Activated CD4-positive, alpha-beta memory T cell treated with anti-CD3 and anti-CD28 coated beads for 36 hours (primary cell): ENCODE measurements at regions of chrX and their contacts with region 1.

Region 1: DNA sequence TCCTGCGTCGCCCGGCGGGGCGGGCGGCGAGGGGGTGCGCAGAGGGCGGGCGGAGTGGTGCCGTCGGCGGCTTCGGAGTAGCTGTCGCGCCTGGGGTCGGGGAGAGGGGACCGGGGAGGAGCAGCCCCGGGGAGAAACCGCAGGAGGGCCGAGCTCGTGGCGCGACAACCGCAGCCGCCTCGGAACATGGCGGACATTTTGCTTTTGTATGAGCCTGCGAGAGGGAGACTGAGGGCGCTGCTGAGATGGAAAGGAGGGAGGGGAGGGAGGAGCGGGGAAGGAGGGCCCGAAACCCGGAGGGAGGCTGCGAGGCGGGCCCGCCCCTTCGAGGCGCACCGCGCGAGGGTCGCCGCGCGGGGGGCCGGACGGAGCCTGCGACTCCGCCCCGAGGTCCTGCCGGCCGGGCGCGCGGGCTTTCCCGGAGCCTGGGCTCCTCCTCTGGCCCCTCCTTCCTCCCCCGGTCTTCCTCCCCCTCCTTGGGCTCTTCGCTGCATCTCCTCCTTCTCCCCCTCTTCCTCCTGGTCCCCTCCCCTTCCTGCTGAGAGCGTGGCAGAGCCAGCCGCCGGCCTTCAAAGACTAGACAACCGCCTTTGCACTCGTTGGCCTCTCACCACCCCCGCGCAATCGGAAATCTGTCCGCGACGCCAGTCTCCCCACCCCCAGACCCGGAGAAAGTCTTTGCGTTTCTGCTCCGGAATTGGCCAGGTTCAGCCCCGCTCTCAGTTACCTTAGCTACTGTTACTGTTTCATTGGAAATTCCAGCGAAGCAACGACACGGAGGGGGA is 1.1 kb downstream of the INTS6L start:
- DNase-seq: peak; percentile 92
- H3K4me3 Mint-ChIP-seq: peak overlapping the region; percentile 99
- H3K27ac Mint-ChIP-seq: peak overlapping the region; percentile 100
- H3K4me1 Mint-ChIP-seq: peaks cover 41% of the 10 kb centered on the region
- H3K27me3 Mint-ChIP-seq: peaks cover 2% of the 10 kb centered on the region

Region 2: GRCh38 chrX:134807039-134807731 is 714.4 kb before region 1 on chrX:
- CTCF ChIA-PET with region 1: no interaction called
- POLR2A ChIA-PET with region 1: no interaction called
- intact Hi-C with region 1: loop called (anchors 2 kb)
- DNase-seq: peak; percentile 91
- H3K4me3 Mint-ChIP-seq: peak overlapping the region; percentile 90
- H3K27ac Mint-ChIP-seq: peak overlapping the region; percentile 93
- H3K4me1 Mint-ChIP-seq: peaks cover 20% of the 10 kb centered on the region
- H3K27me3 Mint-ChIP-seq: no peaks in the 10 kb centered on the region

Region 3: GRCh38 chrX:135050603-135051002 is 471.0 kb before region 1 on chrX:
- CTCF ChIA-PET with region 1: no interaction called
- POLR2A ChIA-PET with region 1: no interaction called
- intact Hi-C with region 1: loop called (anchors 1 kb)
- DNase-seq: no peak
- H3K4me3 Mint-ChIP-seq: peak overlapping the region; percentile 79
- H3K27ac Mint-ChIP-seq: no peak overlapping the region
- H3K4me1 Mint-ChIP-seq: peaks cover 24% of the 10 kb centered on the region
- H3K27me3 Mint-ChIP-seq: no peaks in the 10 kb centered on the region

Region 4: GRCh38 chrX:135403374-135403773 is 118.2 kb before region 1 on chrX:
- CTCF ChIA-PET with region 1: no interaction called
- POLR2A ChIA-PET with region 1: no interaction called
- intact Hi-C with region 1: no loop called
- DNase-seq: no peak
- H3K4me3 Mint-ChIP-seq: no peak overlapping the region
- H3K27ac Mint-ChIP-seq: no peak overlapping the region
- H3K4me1 Mint-ChIP-seq: peaks cover 14% of the 10 kb centered on the region
- H3K27me3 Mint-ChIP-seq: no peaks in the 10 kb centered on the region

Region 5: DNA sequence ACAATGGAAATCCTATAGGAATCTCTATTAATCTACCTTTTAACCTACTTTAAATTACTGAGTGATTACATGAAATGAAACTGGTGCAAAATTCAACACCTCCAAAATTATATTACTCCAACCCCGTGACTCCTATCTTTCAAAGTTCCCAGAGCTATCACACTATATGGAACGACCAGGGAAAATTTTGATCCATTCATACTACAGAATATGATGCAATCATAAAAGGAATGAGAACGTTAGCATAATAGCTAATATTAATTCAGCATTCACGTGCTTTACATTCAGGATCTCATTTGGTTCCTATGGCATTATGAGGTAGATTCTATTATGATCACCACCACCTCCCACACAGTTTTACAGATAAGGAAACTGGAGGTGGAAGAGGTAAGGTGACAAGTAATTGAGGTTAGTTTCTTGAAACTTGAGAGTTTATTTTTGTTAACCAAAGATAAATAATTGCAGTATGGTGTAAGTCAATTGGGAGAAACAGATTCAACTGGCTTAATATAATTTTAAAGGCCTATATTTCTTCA is 30.6 kb before region 1 on chrX:
- CTCF ChIA-PET with region 1: no interaction called
- POLR2A ChIA-PET with region 1: no interaction called
- intact Hi-C with region 1: loop called (anchors 2 kb)
- DNase-seq: no peak
- H3K4me3 Mint-ChIP-seq: no peak overlapping the region
- H3K27ac Mint-ChIP-seq: no peak overlapping the region
- H3K4me1 Mint-ChIP-seq: peaks cover 10% of the 10 kb centered on the region
- H3K27me3 Mint-ChIP-seq: no peaks in the 10 kb centered on the region

Region 6: GRCh38 chrX:135536877-135537276 is 15.3 kb after region 1 on chrX:
- CTCF ChIA-PET with region 1: interaction called, 3 read pairs
- POLR2A ChIA-PET with region 1: interaction called, 4 read pairs
- intact Hi-C with region 1: loop called (anchors 1 kb)
- DNase-seq: no peak
- H3K4me3 Mint-ChIP-seq: no peak overlapping the region
- H3K27ac Mint-ChIP-seq: peak overlapping the region; percentile 76
- H3K4me1 Mint-ChIP-seq: peaks cover 49% of the 10 kb centered on the region
- H3K27me3 Mint-ChIP-seq: no peaks in the 10 kb centered on the region

Region 7: DNA sequence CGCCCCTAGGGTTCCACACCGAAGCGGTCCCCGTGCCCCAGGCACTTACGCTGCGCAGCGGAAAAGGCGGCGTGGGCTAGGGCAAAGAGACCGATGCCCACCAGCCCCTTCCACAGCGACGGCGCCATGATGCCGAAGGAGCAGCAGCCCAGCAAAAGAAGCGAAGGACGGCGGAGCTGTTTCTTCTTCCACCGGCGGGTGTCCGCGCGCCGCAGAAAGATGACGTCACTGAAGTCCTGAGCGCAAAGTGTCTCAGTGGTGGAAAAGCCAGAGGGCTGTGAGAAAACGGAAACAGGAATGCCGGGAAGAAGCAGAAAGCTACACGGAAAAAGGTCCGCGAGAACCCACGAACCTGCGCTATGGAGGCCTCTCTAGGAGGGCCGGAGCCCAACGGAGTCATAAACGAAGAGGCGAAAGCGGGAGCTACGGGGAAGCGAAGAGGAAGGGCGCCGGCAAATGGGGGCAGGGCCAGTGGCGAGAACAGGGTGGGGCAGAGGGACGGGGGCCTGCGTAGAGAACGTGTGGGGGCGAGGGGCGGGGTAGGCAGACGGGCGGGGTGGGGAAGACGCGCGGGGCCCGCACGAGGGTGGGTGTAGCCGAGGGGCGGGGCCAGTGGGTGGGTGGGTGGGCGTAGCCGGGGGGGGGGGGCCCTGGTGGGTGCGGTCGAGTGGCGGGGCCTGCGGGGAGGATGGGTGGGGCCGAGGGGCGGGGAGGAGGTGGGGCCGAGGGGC is 452.1 kb after region 1 on chrX and contains the start of gene MMGT1:
- CTCF ChIA-PET with region 1: no interaction called
- POLR2A ChIA-PET with region 1: no interaction called
- intact Hi-C with region 1: loop called (anchors 5 kb)
- DNase-seq: peak; percentile 89
- H3K4me3 Mint-ChIP-seq: peak within 1 kb of the TSS; percentile 93
- H3K27ac Mint-ChIP-seq: peak within 1 kb of the TSS; percentile 93
- H3K4me1 Mint-ChIP-seq: peaks cover 37% of the 10 kb centered on the region
- H3K27me3 Mint-ChIP-seq: no peaks in the 10 kb centered on the region
- total RNA-seq, gene MMGT1: 20.6 to 21.4 TPM